ENCODE measurements at regions of chr10 and their contacts with region 1.

Region 1: GRCh38 chr10:95601116-95601719 is 40.0 kb upstream of the SORBS1 start:
- DNase-seq: no peak
- H3K4me3 ChIP-seq: no peak overlapping the region
- H3K27ac ChIP-seq: no peak overlapping the region
- H3K4me1 ChIP-seq: peaks cover 0 to 3% (median 0%) of the 10 kb centered on the region in 6 donors
- H3K27me3 ChIP-seq: peaks cover 0 to 6% (median 0%) of the 10 kb centered on the region in 7 donors
- CTCF ChIP-seq: peak; percentile 67 to 92 (median 79)
- POLR2A ChIP-seq: no peak

Region 2: GRCh38 chr10:95430231-95430951 is 170.8 kb before region 1 on chr10:
- intact Hi-C with region 1: loop called (anchors 5 kb)
- DNase-seq: no peak
- H3K4me3 ChIP-seq: no peak overlapping the region
- H3K27ac ChIP-seq: no peak overlapping the region
- H3K4me1 ChIP-seq: peaks cover 0 to 26% (median 7%) of the 10 kb centered on the region in 6 donors
- H3K27me3 ChIP-seq: no peaks in the 10 kb centered on the region
- CTCF ChIP-seq: peak; percentile 85 to 96 (median 92)
- POLR2A ChIP-seq: no peak

Measured in spleen (tissue), 13 donors.